ENCODE measurements at regions of chr2 and their contacts with region 1.

Region 1: DNA sequence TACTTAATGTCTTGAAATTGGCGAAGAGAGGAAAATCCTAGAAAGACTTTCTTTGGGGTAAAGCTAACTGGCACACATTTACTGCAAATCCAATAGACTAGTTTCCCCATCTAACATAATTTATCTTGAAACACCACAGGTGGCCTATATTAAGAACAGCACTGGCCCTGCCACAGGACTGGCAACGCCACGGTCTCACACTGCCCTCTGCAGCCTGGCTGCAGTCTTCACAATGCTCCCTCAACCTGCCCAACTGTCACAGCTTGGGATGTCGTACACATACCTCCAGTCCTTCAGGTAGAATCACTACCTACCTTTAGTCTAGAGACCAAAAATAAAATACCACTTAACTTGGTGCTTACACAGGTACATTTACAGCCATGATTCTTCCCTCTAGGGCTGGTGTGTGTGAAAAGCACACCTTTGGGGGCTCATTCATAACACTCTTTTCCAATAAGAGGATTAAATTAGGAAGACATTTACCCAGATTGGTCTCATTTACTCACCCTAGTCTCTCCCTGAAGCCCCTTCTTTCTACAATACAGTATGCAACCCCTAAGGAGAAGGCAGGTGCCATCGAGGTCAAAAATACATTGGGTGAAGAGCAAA is 222.2 kb downstream of the C1D start:
- DNase-seq: peak; percentile 73
- H3K4me3 ChIP-seq: 0 out of 4 replicates have a peak overlapping the region, but pooled peaks of 1 of the 2 experiments have one; percentile 22
- H3K27ac ChIP-seq: peak overlapping the region in 1 of 2 experiments; percentile 81; a peak in 2 of 4 replicates
- H3K4me1 ChIP-seq: peaks cover 5 to 20% of the 10 kb centered on the region in 2 experiments; a peak in 3 of 4 replicates
- H3K27me3 ChIP-seq: no peaks in the 10 kb centered on the region
- CTCF ChIP-seq: peak; percentile 93
- EP300 ChIP-seq: peak in 1 of 2 experiments; percentile 96; a peak in 2 of 4 replicates
- RAD21 ChIP-seq: peak; percentile 100

Region 2: GRCh38 chr2:66429071-66429477 is 1411.5 kb before region 1 on chr2:
- CTCF ChIA-PET with region 1: interaction called, 41 read pairs
- POLR2A ChIA-PET with region 1: interaction called, 5 read pairs
- DNase-seq: peak; percentile 63
- H3K4me3 ChIP-seq: no peak overlapping the region; a peak in 1 of 4 replicates
- H3K27ac ChIP-seq: no peak overlapping the region
- H3K4me1 ChIP-seq: peaks cover 0 to 2% of the 10 kb centered on the region in 2 experiments; a peak in 1 of 4 replicates
- H3K27me3 ChIP-seq: no peaks in the 10 kb centered on the region
- CTCF ChIP-seq: peak; percentile 92
- EP300 ChIP-seq: no peak
- RAD21 ChIP-seq: peak; percentile 93

Region 3: DNA sequence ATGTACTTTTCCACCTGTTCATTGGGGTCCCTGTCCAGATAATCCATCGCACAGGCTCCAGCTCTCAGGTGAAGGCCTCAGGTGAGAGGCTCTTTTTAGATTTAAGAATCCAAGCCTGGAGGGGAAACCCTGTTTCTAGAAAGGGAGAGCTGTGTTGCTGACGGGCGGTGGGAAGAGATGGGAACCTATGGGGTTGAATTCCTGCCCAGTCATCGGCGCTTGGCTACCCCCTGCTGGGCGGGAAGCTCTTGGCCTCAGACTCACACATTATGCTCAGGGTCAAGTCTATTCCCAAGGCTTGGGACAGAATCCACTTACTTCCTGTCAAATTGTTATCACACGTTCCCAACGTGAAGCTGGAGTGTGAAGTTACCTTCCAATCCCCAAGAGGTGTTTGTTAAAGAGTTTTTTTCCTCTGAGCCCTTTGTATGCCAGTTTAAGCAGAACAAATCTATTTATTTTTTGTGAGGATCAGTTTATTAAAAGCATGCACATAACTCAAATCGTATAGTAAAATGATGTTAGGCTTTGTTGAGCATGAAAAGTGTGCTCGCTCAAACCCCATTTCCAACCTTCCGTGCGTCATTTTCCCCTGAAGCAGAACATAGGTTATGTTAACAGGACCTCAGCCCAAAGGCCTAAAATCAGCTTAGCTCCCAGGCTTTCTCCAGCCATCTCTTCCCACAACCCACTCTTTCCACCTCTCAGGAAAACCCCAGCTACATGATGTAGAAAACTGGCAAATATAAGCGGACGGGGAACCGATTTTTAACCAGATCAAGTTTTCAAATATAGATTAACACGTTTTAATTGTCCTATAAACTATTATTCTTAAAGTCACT is 625.1 kb before region 1 on chr2:
- CTCF ChIA-PET with region 1: interaction called, 10 read pairs
- POLR2A ChIA-PET with region 1: interaction called, 3 read pairs
- DNase-seq: peak; percentile 69
- H3K4me3 ChIP-seq: no peak overlapping the region; a peak in 1 of 4 replicates
- H3K27ac ChIP-seq: peak overlapping the region in 1 of 2 experiments; percentile 53; a peak in 2 of 4 replicates
- H3K4me1 ChIP-seq: peaks cover 0 to 18% of the 10 kb centered on the region in 2 experiments; a peak in 2 of 4 replicates
- H3K27me3 ChIP-seq: no peaks in the 10 kb centered on the region
- CTCF ChIP-seq: peak; percentile 71
- EP300 ChIP-seq: no peak
- RAD21 ChIP-seq: peak; percentile 97

Region 4: DNA sequence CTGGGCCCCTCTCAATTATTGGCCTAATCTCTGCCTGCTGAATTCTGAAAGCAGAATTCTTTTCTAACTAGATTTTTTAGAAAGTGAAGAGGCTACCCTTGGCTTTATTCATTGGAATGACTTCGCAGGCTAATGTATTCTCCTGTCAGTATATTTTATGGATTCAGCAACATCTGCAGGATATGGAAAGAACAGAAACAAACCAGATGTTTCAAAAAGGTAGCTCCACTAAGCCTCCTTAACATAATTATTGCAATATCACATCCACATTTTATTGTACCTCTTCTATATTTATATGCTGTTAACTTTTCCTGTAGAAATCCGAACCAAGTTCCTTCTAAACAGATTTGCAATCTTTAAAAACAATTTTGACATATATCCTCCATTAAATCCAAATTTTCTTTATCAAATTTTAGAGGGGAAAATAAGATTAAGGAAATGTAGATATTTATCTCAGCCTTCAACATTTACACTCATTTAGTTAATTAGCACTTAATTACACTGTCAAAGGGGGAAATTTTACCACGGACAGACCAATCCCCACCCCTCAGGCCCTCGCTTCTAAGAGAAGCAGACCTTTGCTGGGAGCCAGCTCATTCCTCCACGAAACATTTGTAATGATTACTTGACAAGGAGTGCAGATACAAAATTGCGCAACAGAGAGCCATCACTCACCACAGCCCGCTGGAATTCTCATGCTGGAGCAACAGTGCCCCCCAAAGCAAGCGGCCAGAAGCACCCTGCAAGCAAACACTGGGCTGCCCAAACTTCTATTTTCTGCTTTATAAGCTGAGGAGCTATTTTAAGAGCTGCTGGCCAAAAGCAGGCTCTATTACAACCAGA is 190.1 kb before region 1 on chr2:
- CTCF ChIA-PET with region 1: interaction called, 60 read pairs
- POLR2A ChIA-PET with region 1: interaction called, 3 read pairs
- DNase-seq: peak; percentile 67
- H3K4me3 ChIP-seq: no peak overlapping the region; a peak in 1 of 4 replicates
- H3K27ac ChIP-seq: peak overlapping the region; percentile 36 to 90; a peak in 3 of 4 replicates
- H3K4me1 ChIP-seq: peaks cover 26 to 29% of the 10 kb centered on the region in 2 experiments; a peak in 3 of 4 replicates
- H3K27me3 ChIP-seq: no peaks in the 10 kb centered on the region
- CTCF ChIP-seq: peak; percentile 91
- EP300 ChIP-seq: peak; percentile 68 to 83; a peak in 3 of 4 replicates
- RAD21 ChIP-seq: peak; percentile 95

Region 5: DNA sequence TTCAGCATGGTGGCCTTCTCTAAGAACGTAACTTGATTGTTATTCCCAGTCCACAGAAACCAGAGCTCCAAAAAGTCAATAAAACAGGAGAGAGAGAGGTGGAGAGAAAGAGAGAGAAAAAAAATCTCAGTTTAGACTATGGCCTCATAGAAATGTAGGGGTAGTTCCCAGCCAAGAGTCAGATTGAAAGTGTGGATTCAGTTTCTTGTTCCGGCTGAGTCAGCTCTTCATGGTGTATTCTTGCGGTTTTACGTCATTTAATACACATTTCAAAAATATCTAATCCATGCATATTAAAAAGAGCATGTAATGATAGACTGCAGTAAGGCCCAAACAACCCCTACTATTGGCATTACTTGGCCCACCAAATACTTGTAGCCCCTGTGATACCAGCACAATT is 139.6 kb before region 1 on chr2:
- CTCF ChIA-PET with region 1: interaction called, 20 read pairs
- POLR2A ChIA-PET with region 1: interaction called, 5 read pairs
- DNase-seq: no peak
- H3K4me3 ChIP-seq: no peak overlapping the region
- H3K27ac ChIP-seq: peak overlapping the region in 1 of 2 experiments; percentile 90; a peak in 2 of 4 replicates
- H3K4me1 ChIP-seq: peaks cover 0 to 16% of the 10 kb centered on the region in 2 experiments; a peak in 2 of 4 replicates
- H3K27me3 ChIP-seq: no peaks in the 10 kb centered on the region
- CTCF ChIP-seq: no peak
- EP300 ChIP-seq: no peak
- RAD21 ChIP-seq: no peak

Region 6: DNA sequence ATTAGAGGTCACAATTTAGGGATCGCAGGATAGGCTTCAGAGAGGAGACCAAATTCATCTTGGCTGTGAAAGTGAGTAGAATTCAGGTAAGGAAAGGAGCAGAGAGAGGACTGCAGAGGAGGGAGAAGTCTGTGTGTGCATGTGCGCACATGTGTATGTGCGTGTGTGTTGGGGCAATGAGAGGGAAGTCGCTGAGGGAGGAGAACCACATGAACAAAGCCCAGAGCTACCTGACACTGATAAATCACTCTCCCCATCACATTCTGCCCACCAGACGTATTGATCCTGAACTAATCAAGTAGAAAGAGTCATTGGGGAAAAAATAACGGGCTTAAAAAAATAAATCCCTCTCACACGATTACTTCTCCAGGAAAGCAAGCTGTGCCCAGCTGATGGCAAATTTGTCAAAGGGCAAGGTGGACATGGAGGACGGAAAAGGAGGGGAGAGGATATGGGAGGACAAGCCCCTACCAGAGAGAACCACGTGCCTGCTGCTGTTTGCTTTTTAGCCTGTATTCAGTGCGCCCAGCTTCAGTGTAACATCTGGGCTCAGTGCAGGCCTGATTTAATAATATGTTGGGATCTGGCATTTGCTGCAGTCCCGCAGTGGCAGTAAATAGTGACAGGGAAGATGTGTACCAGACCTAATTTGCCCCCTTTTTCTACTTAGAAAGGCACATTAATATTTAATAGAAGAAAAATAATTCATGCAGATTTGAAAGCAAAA is 85.2 kb before region 1 on chr2:
- CTCF ChIA-PET with region 1: interaction called, 12 read pairs
- POLR2A ChIA-PET with region 1: interaction called, 3 read pairs
- DNase-seq: peak; percentile 61
- H3K4me3 ChIP-seq: no peak overlapping the region
- H3K27ac ChIP-seq: peak overlapping the region in 1 of 2 experiments; percentile 97; a peak in 2 of 4 replicates
- H3K4me1 ChIP-seq: peaks cover 12 to 41% of the 10 kb centered on the region in 2 experiments; a peak in 3 of 4 replicates
- H3K27me3 ChIP-seq: no peaks in the 10 kb centered on the region
- CTCF ChIP-seq: no peak
- EP300 ChIP-seq: peak in 1 of 2 experiments; percentile 98; a peak in 2 of 4 replicates
- RAD21 ChIP-seq: peak; percentile 46

Region 7: GRCh38 chr2:67854798-67855197 is 14.2 kb after region 1 on chr2:
- CTCF ChIA-PET with region 1: interaction called, 18 read pairs
- POLR2A ChIA-PET with region 1: interaction called, 3 read pairs
- DNase-seq: no peak
- H3K4me3 ChIP-seq: no peak overlapping the region
- H3K27ac ChIP-seq: peak overlapping the region in 1 of 2 experiments; percentile 97; a peak in 2 of 4 replicates
- H3K4me1 ChIP-seq: peaks cover 0 to 18% of the 10 kb centered on the region in 2 experiments; a peak in 2 of 4 replicates
- H3K27me3 ChIP-seq: no peaks in the 10 kb centered on the region
- CTCF ChIP-seq: peak; percentile 19; the same call in 1 of the 2 replicates
- EP300 ChIP-seq: no peak
- RAD21 ChIP-seq: no peak

Region 8: DNA sequence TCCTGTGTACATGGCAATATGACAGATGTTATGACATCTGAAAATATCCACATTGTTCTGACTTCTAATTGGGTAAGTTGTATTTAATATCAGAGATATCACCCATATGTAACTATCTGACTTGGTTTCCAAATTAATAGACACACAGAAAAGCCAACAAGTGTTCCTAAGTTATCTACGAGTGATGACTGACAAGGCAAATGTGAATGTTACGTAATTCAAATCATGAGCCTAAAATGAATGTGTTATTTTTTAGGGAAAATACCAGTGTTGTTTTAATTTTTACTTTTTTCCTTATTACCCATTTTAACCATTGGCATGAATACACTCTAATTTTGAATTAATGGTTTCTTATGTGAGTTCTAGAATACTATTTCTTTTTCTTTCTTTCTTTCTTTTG is 301.3 kb after region 1 on chr2:
- CTCF ChIA-PET with region 1: no interaction called
- POLR2A ChIA-PET with region 1: no interaction called
- DNase-seq: no peak
- H3K4me3 ChIP-seq: no peak overlapping the region
- H3K27ac ChIP-seq: no peak overlapping the region
- H3K4me1 ChIP-seq: no peaks in the 10 kb centered on the region
- H3K27me3 ChIP-seq: no peaks in the 10 kb centered on the region
- CTCF ChIP-seq: no peak
- EP300 ChIP-seq: no peak
- RAD21 ChIP-seq: no peak